ENCODE measurements at regions of chr14 and their contacts with region 1.

Region 1: DNA sequence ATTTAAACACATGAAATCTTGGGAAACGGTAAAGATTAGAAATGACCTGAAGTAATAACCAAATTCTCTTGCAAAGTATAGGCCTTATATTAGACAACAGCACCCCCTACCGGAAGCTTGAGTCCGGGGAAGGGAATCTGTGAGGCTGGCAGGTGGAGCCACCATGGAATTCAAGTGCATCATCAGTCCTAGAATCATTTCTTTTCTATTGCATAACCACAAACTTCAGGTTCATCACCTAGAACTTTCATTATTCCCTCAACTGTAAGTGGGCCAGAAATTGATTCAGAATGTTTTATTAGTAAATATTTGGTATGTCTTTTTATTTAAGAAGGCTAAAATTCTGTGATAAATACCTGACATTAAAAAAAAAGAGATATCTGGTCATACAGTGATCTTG is 48.5 kb downstream of the AP5M1 start:
- ATAC-seq: peak; percentile 39 to 86 (median 74)
- H3K4me3 ChIP-seq: no peak overlapping the region
- H3K27ac ChIP-seq: no peak overlapping the region
- H3K4me1 ChIP-seq: peaks cover 0 to 2% of the 10 kb centered on the region in 2 donors

Region 2: DNA sequence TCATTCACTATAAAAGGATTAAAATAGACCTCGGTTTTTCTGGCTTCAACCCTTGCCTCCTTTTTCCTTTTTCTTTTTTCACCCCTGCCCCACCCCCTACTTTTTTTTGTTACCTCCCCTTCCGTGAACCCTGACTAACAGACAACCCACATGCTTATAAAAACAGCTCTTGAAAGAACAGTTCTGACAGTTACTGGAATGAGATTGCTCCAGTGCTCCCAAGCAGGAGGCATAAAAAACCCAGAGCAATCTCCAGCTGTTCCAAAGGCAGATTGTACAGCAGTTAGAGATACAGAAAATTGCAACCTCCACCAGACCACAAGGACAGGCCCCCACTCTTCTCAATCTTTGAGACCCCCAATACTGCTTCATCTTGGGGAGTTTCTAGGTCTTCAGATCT is 767.6 kb before region 1 on chr14:
- in situ Hi-C with region 1: loop called in 1 of 9 experiments (anchors 25 kb)
- ATAC-seq: no peak
- H3K4me3 ChIP-seq: no peak overlapping the region
- H3K27ac ChIP-seq: no peak overlapping the region
- H3K4me1 ChIP-seq: peaks cover 0 to 2% of the 10 kb centered on the region in 2 donors

Region 3: GRCh38 chr14:57046175-57046574 is 271.1 kb before region 1 on chr14:
- in situ Hi-C with region 1: no loop called
- ATAC-seq: no peak
- H3K4me3 ChIP-seq: no peak overlapping the region
- H3K27ac ChIP-seq: no peak overlapping the region
- H3K4me1 ChIP-seq: no peaks in the 10 kb centered on the region

Region 4: GRCh38 chr14:57574617-57575303 is 257.4 kb after region 1 on chr14:
- in situ Hi-C with region 1: no loop called
- ATAC-seq: no peak
- H3K4me3 ChIP-seq: no peak overlapping the region
- H3K27ac ChIP-seq: no peak overlapping the region
- H3K4me1 ChIP-seq: peaks cover 22 to 69% of the 10 kb centered on the region in 2 donors

Region 5: GRCh38 chr14:57657487-57657886 is 340.2 kb after region 1 on chr14:
- in situ Hi-C with region 1: no loop called
- ATAC-seq: peak in 3 of 8 experiments; percentile 7 to 32 (median 30)
- H3K4me3 ChIP-seq: no peak overlapping the region
- H3K27ac ChIP-seq: no peak overlapping the region
- H3K4me1 ChIP-seq: peaks cover 15 to 23% of the 10 kb centered on the region in 2 donors

Measured in motor neuron (in vitro differentiated cells).